GM12878 (cell line): ENCODE measurements at regions of chr17 and their contacts with region 1.

Region 1: DNA sequence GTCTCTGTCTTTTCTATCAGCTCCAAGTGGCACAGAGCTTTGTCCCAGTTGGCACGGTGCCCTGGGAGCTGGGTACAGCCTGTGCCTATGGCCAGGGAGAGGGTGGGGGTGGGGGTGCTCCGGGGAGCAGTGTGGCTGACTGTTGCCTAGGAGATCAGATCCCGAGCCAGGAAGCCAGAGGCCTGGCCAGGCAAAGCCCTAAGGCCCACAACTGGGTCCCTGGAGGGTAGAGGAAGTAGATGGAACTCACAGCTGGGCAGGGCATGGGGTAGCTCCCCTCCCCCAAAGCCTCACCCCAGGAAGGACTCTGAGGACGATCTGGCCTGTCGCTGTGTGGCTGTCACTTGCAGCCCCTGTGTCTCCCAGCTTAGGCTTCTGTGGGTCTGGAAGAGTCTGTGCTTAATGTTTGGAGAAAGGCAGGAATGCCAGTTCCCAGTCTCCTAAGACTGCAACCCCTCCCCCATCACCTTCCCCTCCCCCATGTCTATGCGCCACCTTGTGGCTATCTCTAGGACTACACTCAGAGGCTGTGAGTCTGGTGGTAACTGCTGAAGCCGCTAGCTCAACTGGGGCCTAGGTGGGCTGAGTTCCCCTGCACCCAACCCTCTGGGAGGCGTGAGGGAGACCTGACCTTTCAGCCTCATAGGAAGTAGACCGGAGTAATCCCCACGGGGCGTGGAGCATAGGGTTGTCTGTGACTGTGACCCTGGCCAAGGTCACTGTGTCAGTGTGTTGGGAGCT is 12.6 kb downstream of the THRA start:
- DNase-seq: no peak
- ATAC-seq: peak; percentile 89
- H3K4me3 ChIP-seq: no peak overlapping the region
- H3K27ac ChIP-seq: no peak overlapping the region
- H3K4me1 ChIP-seq: peaks cover 6% of the 10 kb centered on the region
- H3K27me3 ChIP-seq: no peaks in the 10 kb centered on the region
- CTCF ChIP-seq: peak; percentile 72 to 91 (median 81)
- EP300 ChIP-seq: no peak
- POLR2A ChIP-seq: no peak
- RAD21 ChIP-seq: peak; percentile 57

Region 2: GRCh38 chr17:40026816-40027613 is 48.4 kb before region 1 on chr17:
- CTCF ChIA-PET with region 1: interaction called, 19 read pairs
- POLR2A ChIA-PET with region 1: no interaction called
- RAD21 ChIA-PET with region 1: no interaction called
- SMC1A ChIA-PET with region 1: interaction called, 5 read pairs
- in situ Hi-C with region 1: no loop called
- intact Hi-C with region 1: no loop called
- DNase-seq: peak; percentile 12
- ATAC-seq: peak; percentile 100
- H3K4me3 ChIP-seq: no peak overlapping the region
- H3K27ac ChIP-seq: no peak overlapping the region
- H3K4me1 ChIP-seq: no peaks in the 10 kb centered on the region
- H3K27me3 ChIP-seq: no peaks in the 10 kb centered on the region
- CTCF ChIP-seq: peak; percentile 80 to 88 (median 86)
- EP300 ChIP-seq: no peak
- POLR2A ChIP-seq: no peak
- RAD21 ChIP-seq: peak; percentile 63

Region 3: GRCh38 chr17:40062329-40063186 is 12.8 kb before region 1 on chr17 and contains the start of gene THRA:
- CTCF ChIA-PET with region 1: interaction called, 142 read pairs
- POLR2A ChIA-PET with region 1: interaction called, 8 read pairs
- RAD21 ChIA-PET with region 1: interaction called, 29 read pairs
- SMC1A ChIA-PET with region 1: interaction called, 22 read pairs
- in situ Hi-C with region 1: no loop called
- intact Hi-C with region 1: no loop called
- DNase-seq: no peak
- ATAC-seq: peak; percentile 89
- H3K4me3 ChIP-seq: peak within 1 kb of the TSS; percentile 93
- H3K27ac ChIP-seq: no peak within 1 kb of the TSS
- H3K4me1 ChIP-seq: peaks cover 5% of the 10 kb centered on the region
- H3K27me3 ChIP-seq: peaks cover 10 to 11% of the 10 kb centered on the region in 2 experiments; a peak in 3 of 4 replicates
- CTCF ChIP-seq: peak in 1 of 3 experiments; percentile 27; a peak in 2 of 6 replicates
- EP300 ChIP-seq: no peak
- POLR2A ChIP-seq: no peak
- RAD21 ChIP-seq: no peak
- polyA plus RNA-seq, gene THRA: 0.03 to 0.07 TPM

Region 4: DNA sequence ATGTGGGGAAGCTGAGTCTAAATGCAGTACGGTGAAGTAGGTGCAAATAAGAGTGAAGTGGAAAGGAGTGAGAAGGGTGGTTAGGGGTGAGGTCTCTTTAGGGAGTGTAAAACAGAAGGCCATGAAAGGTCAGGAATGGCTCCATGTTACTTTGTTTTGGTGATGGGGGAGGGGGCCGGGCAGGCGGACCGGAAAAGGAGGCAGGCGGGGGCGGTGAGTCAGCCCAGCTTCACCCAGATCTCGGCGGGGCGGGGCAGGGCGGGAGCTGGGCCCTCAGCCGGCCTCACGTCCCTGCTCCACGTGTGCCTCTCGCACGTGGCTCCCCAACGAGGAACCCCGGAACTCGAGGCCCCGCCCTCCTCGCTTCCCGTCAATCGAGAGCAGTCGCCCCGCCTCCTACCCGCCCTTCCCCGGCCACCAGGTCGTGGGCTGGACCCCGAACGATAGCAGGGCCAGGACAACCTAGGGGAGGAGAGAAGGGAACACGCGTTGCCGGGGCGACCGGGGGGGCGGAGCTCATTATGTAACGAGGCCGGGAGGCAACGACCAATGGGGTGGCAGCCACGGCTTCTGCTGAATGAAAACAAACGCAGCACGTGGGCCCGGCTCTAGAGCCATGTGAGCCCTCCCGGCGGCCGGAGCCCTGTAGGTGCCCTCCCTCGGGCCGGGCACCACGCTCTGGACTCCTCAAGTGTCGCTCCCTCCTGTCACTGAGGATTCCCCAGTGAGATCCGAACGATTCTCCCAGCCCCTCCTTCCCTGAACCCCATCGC is 23.7 kb after region 1 on chr17:
- CTCF ChIA-PET with region 1: interaction called, 42 read pairs
- POLR2A ChIA-PET with region 1: interaction called, 6 read pairs
- RAD21 ChIA-PET with region 1: interaction called, 10 read pairs
- SMC1A ChIA-PET with region 1: interaction called, 7 read pairs
- in situ Hi-C with region 1: no loop called
- intact Hi-C with region 1: no loop called
- DNase-seq: peak; percentile 97
- ATAC-seq: peak; percentile 80
- H3K4me3 ChIP-seq: peak overlapping the region; percentile 90
- H3K27ac ChIP-seq: peak overlapping the region; percentile 88
- H3K4me1 ChIP-seq: peaks cover 64% of the 10 kb centered on the region
- H3K27me3 ChIP-seq: no peaks in the 10 kb centered on the region
- CTCF ChIP-seq: no peak
- EP300 ChIP-seq: no peak
- POLR2A ChIP-seq: no peak; the same call in 1 of the 2 replicates
- RAD21 ChIP-seq: no peak

Region 5: DNA sequence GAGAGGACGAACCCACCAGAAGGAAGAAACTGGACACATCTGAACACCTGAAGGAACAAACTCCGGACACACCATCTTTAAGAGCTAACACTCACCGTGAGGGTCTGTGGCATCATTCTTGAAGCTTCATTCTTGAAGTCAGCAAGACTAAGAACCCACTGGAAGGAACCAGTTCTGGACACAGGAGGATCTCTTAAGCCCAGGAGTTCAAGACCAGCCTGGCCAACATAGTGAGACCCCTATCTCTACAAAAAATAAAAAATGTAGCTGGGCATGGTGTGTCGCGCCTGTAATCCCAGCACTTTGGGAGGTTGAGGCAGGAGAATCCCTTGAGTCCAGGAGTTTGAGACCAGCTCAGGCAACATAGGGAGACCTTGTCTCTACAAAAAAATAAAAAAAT is 123.2 kb after region 1 on chr17:
- CTCF ChIA-PET with region 1: no interaction called
- POLR2A ChIA-PET with region 1: no interaction called
- RAD21 ChIA-PET with region 1: no interaction called
- SMC1A ChIA-PET with region 1: no interaction called
- in situ Hi-C with region 1: no loop called
- intact Hi-C with region 1: no loop called
- DNase-seq: no peak
- ATAC-seq: no peak
- H3K4me3 ChIP-seq: no peak overlapping the region
- H3K27ac ChIP-seq: no peak overlapping the region
- H3K4me1 ChIP-seq: peaks cover 13% of the 10 kb centered on the region
- H3K27me3 ChIP-seq: no peaks in the 10 kb centered on the region
- CTCF ChIP-seq: no peak
- EP300 ChIP-seq: no peak
- POLR2A ChIP-seq: no peak
- RAD21 ChIP-seq: no peak